Endothelial cell of umbilical vein (primary cell): ENCODE measurements at regions of chr13 and their contacts with region 1.

Region 1: DNA sequence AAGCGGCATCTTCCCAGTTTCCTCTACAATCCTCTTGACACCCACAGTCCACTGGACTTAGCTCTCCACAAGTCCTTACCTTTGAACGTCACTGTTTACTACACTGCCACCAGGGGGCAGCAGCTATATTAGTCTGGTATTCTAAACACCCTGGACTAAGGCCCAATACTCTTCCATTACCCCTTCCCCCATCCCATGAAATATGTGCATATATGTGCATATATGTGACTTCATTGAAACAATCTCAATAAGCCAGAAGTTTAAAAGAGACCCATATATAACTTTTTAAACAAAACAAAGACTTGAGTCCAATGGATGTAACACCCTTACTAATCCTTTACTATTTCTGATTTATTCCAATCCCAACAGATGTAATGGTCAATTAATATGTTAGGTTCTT is 15.5 kb downstream of the GGACT start:
- DNase-seq: peak; percentile 83
- H3K4me3 ChIP-seq: no peak overlapping the region
- H3K27ac ChIP-seq: no peak overlapping the region
- H3K4me1 ChIP-seq: no peaks in the 10 kb centered on the region
- H3K27me3 ChIP-seq: no peaks in the 10 kb centered on the region
- CTCF ChIP-seq: peak; percentile 72 to 75
- POLR2A ChIP-seq: no peak

Region 2: GRCh38 chr13:100588331-100589177 is 15.4 kb after region 1 on chr13 and contains the start of gene GGACT:
- CTCF ChIA-PET with region 1: interaction called, 80 read pairs
- POLR2A ChIA-PET with region 1: no interaction called
- dilution Hi-C with region 1: no loop called
- intact Hi-C with region 1: no loop called
- DNase-seq: peak; percentile 56
- H3K4me3 ChIP-seq: peak within 1 kb of the TSS; percentile 27 to 67 (median 57)
- H3K27ac ChIP-seq: peak within 1 kb of the TSS; percentile 33
- H3K4me1 ChIP-seq: peaks cover 15% of the 10 kb centered on the region
- H3K27me3 ChIP-seq: no peaks in the 10 kb centered on the region
- CTCF ChIP-seq: peak; percentile 72 to 92
- POLR2A ChIP-seq: no peak
- total RNA-seq, gene GGACT: 5.4 and 6.5 TPM in 2 replicates

Region 3: GRCh38 chr13:100630555-100630954 is 57.4 kb after region 1 on chr13:
- CTCF ChIA-PET with region 1: interaction called, 21 read pairs
- POLR2A ChIA-PET with region 1: no interaction called
- dilution Hi-C with region 1: no loop called
- intact Hi-C with region 1: loop called (anchors 1 kb)
- DNase-seq: peak; percentile 40
- H3K4me3 ChIP-seq: no peak overlapping the region
- H3K27ac ChIP-seq: no peak overlapping the region
- H3K4me1 ChIP-seq: peaks cover under 1% of the 10 kb centered on the region
- H3K27me3 ChIP-seq: no peaks in the 10 kb centered on the region
- CTCF ChIP-seq: peak in 1 of 2 donors; percentile 3
- POLR2A ChIP-seq: no peak

Region 4: GRCh38 chr13:100721885-100722512 is 148.9 kb after region 1 on chr13:
- CTCF ChIA-PET with region 1: interaction called, 9 read pairs
- POLR2A ChIA-PET with region 1: no interaction called
- dilution Hi-C with region 1: no loop called
- intact Hi-C with region 1: loop called (anchors 1 kb)
- DNase-seq: peak; percentile 55
- H3K4me3 ChIP-seq: no peak overlapping the region
- H3K27ac ChIP-seq: no peak overlapping the region
- H3K4me1 ChIP-seq: no peaks in the 10 kb centered on the region
- H3K27me3 ChIP-seq: no peaks in the 10 kb centered on the region
- CTCF ChIP-seq: peak; percentile 64 to 69
- POLR2A ChIP-seq: no peak

Region 5: DNA sequence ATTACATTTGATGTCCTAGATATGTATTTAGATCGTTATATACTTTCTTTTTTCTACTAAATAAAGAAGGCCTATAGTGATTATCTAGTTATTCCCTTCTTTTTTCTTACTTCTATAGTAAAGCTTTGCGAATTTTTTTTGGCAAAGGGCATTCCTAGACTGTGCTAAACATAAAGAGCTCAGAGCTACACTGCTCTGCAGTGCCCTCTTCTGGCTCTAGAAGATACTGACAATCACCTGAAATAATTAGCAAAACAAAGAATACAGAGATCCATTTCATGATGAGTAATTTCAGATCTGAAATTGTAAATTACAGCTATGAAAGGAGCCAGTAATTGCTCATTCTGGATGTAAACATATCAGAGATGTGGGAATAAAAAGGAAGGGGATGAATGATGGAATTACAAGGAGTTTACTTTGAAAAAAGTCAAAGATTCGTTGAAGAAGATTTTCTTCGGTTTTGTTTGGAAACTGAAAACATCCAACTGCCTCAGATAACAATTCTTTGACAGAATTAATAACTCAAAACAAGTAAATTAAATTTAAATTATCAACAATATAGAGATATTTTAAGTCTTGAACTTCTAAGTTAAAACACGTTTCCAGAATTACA is 554.7 kb after region 1 on chr13:
- CTCF ChIA-PET with region 1: interaction called, 91 read pairs
- POLR2A ChIA-PET with region 1: no interaction called
- dilution Hi-C with region 1: no loop called
- intact Hi-C with region 1: loop called (anchors 1 kb)
- DNase-seq: peak; percentile 66
- H3K4me3 ChIP-seq: no peak overlapping the region
- H3K27ac ChIP-seq: no peak overlapping the region
- H3K4me1 ChIP-seq: no peaks in the 10 kb centered on the region
- H3K27me3 ChIP-seq: no peaks in the 10 kb centered on the region
- CTCF ChIP-seq: peak; percentile 61 to 63
- POLR2A ChIP-seq: no peak

Region 6: DNA sequence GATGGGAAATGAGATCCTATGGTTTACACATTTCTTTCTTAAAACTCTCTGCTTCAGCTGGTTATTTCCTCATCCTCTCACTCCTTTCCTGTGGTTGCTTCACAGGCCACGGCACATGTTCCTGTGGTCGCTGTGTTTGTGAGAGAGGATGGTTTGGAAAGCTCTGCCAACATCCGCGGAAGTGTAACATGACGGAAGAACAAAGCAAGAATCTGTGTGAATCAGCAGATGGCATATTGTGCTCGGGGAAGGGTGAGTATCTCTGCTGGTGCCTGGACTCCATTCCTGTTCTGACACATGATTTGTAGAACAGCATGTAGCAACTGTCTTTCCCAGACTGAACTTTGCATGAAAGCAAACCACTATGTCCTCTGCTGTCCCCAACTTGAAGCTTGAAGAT is 1133.5 kb after region 1 on chr13:
- CTCF ChIA-PET with region 1: no interaction called
- POLR2A ChIA-PET with region 1: no interaction called
- dilution Hi-C with region 1: no loop called
- intact Hi-C with region 1: no loop called
- DNase-seq: peak; percentile 38
- H3K4me3 ChIP-seq: no peak overlapping the region
- H3K27ac ChIP-seq: no peak overlapping the region
- H3K4me1 ChIP-seq: no peaks in the 10 kb centered on the region
- H3K27me3 ChIP-seq: no peaks in the 10 kb centered on the region
- CTCF ChIP-seq: no peak
- POLR2A ChIP-seq: no peak